ENCODE measurements at regions of chr17 and their contacts with region 1.

Region 1: GRCh38 chr17:409848-410545 is 57.4 kb upstream of the RPH3AL start:
- DNase-seq: peak; percentile 100
- ATAC-seq: peak; percentile 94

Region 2: DNA sequence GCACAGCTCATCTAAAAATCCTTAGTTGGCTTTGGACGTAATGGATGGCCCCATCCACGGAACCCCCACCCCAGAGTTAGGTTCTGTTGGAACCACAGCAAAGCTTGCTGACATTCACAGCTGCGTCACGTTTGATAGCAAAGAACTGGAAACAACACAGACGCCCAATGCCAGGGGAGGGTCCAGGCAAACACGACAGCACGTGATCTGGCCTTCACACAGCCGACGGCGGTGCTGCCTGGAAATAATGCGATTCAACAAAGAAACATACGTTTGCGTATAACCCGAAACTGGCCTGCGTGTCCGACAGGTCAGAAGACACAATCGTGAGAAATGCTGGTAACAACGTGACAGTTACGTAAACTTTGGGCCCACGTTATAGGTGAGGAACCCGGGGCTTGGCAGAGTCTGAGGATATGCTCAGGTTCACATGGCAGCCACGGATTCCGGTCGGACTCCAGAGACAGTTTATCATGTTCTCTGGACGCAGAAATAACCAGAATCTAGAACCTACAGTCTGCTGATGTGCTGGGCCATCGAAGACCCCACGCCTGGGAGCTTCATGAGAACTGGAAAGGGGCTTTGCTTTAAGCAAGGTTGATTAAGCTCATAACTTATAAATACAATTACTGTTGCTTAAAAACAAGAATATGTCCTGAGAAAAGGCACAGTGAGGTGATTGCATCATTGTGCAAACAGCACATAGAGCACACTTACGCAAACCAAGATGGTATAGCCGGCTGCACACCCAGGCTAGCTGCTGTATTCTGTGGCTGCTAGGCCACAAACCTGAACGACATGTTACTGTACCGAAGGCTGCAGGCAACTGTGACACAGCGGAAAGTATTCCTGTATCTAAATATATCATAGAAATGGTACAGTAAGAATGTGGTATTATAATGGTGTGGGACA is 127.7 kb before region 1 on chr17:
- intact Hi-C with region 1: no loop called
- DNase-seq: no peak
- ATAC-seq: no peak

Region 3: DNA sequence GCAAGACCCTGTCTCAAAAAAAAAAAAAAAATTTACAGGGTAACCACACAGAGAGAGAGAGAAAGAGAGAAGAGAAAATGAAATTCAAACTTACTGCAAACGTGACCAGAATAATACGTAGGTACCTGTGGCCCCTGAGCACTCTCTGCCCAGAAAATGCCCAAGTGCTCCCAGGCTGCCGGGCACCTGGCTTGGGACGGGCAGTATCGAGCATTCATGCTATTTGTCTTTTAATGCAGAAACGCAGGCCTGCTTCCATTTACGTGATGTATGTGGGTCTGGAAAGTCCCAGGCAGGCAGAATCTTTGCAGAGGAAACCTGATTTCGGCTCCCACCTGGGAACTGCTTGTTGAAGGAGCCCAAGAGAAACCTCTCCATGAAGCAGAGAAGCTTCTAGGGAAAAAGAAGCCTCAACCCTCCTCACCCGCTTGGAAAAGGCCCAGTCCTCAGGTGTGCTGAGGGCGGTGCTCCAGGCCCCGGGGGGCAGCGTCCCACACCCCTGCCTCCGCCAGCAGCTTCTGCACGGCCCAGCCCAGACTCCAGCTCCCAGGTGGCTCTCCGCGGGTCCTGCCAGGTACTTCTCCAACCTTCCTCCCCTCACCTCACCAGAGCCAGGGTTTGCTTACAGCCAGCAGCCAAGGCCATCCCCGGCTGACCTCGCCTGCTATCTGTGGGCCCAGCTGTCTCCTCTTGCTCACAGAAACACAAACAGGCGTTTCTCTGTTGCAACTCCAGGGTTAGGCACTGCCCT is 71.4 kb before region 1 on chr17:
- intact Hi-C with region 1: no loop called
- DNase-seq: peak; percentile 57
- ATAC-seq: peak; percentile 44

Region 4: GRCh38 chr17:385926-386876 is 23.8 kb before region 1 on chr17:
- intact Hi-C with region 1: no loop called
- DNase-seq: peak; percentile 88
- ATAC-seq: peak; percentile 77

Region 5: GRCh38 chr17:700504-701094 is 290.6 kb after region 1 on chr17:
- intact Hi-C with region 1: loop called (anchors 5 kb)
- DNase-seq: no peak
- ATAC-seq: peak; percentile 33